GM18951 (cell line): ENCODE measurements at regions of chr15 and their contacts with region 1.

Region 1: DNA sequence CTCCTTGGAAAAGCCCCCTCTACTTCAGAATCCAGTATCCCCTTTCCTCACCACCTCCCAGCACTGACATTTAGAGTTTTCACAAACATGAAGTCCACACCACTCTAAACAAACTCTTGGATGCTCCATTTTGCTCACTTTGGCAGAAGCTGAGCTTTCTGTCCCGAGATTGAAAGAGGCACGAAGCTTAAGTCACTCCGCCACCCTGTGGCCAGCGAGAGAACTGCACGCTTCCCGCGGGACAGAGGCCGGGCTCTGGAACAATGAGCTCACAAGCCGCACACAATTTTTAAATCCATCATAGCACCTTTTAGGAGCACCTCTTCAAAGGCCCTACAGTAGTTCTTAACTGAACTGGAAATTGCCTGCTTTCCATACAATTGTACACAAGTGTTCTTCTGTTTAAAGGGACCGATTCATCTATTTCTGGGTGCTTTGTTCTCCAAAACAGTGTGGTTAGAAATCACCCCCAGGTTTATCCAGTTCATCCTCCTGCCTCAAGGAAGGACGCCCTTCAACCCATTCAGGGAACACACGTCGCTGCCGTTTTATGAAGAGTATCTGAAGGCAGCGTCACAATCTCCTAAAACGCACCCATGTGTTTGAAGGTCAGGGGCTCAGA is 226.1 kb downstream of the VPS13C start:
- POLR2A ChIP-seq: no peak

Region 2: GRCh38 chr15:61169904-61170695 is 664.1 kb before region 1 on chr15:
- in situ Hi-C with region 1: loop called (anchors 10 kb)
- POLR2A ChIP-seq: no peak